ENCODE measurements at regions of chr7 and their contacts with region 1.

Region 1: DNA sequence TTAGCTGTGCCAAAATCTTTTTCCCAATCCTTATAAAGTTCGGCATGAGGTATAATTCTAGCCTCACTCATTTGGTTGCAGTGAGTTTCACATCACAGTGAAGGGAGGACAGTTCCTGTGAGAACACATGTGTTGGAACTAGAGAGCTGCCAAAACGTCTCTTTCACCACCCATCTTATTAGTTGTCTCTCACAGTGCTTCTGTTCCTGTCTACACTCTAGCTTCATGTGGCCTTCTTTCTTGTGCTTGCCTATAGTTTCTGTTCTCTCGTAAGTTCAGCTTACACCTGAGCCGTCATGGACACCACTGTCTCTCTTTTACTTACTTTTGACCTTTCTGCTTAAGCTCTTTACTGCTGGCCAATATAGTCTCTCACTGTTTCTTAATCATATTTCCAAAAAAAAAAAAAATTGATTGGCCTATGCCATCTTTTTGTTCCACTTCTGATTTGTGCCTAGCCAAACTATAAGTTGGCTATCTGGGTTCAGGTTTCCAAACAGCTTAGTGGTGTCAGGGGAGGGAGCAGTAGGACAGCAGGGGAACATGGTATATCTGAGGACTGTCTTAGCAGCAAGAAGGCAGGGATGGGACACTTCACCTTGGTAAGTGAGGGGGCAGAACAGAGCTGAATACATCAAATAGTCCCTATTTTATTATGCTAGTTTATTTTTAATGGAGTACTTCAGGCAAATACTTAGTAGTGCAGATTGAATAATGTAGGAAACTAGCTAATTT is 38.0 kb downstream of the ZNRF2 start:
- DNase-seq: peak; percentile 48
- ATAC-seq: peak; percentile 74
- H3K4me3 Mint-ChIP-seq: peak overlapping the region; percentile 79
- H3K27ac Mint-ChIP-seq: peak overlapping the region; percentile 97
- H3K4me1 Mint-ChIP-seq: peaks cover 43% of the 10 kb centered on the region
- H3K27me3 Mint-ChIP-seq: no peaks in the 10 kb centered on the region

Region 2: DNA sequence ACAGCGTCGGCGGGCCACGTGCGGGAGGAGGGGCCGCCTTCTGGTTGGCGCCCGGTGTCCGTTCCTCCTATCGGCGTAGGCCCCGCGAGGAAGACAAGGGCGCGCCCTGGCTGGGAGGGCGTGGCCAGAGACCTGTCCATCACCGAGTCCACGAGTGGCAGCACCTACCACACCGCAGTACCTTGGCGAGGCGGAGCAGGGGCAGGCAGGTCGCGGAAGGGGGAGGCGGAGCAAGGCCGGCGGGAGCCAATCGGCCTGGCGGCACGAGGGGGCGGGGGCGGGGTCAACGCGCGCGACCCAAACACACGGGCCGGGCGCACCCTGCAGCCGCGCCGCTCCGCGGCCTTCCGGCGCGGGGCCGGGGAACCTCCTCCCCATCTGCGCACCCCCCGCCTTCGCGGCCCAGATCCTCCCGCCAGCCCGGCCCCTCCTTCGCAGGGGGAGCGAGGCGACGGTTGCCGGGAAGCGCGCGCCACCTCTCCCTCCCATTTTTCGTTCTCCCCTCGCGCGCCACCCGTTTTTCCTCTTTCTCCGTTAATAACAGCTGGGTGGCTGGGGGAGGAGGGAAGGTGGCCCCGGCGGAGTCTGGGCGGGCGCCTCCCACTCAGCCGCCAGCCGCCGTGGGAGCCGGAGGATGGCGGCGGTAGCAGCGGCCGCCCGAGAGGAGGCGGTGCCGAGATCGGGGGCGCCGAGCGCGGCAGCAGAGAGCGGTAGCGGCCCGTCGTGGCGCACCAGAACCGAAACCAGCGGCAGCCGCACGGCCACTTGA is 38.0 kb before region 1 on chr7 and contains the start of gene ZNRF2:
- CTCF ChIA-PET with region 1: interaction called, 5 read pairs
- POLR2A ChIA-PET with region 1: interaction called, 18 read pairs
- DNase-seq: peak; percentile 99
- ATAC-seq: peak; percentile 92
- H3K4me3 Mint-ChIP-seq: peak within 1 kb of the TSS; percentile 79
- H3K27ac Mint-ChIP-seq: peak within 1 kb of the TSS; percentile 87
- H3K4me1 Mint-ChIP-seq: peaks cover 42% of the 10 kb centered on the region
- H3K27me3 Mint-ChIP-seq: no peaks in the 10 kb centered on the region
- total RNA-seq, gene ZNRF2: 15.1 to 15.2 TPM